HepG2 (cell line): ENCODE measurements at regions of chr21 and their contacts with region 1.

Region 1: GRCh38 chr21:33229784-33230544 is at the start of gene IFNAR2:
- DNase-seq: peak; percentile 40
- ATAC-seq: peak; percentile 80
- H3K4me3 ChIP-seq: peak within 1 kb of the TSS; percentile 87 to 97 (median 89)
- H3K27ac ChIP-seq: peak within 1 kb of the TSS; percentile 91
- H3K4me1 ChIP-seq: peaks cover 71% of the 10 kb centered on the region
- H3K27me3 ChIP-seq: no peaks in the 10 kb centered on the region; a peak in 1 of 5 replicates
- CTCF ChIP-seq: no peak
- EP300 ChIP-seq: no peak
- POLR2A ChIP-seq: peak; percentile 39 to 56; a peak in 2 of 4 replicates
- RAD21 ChIP-seq: 0 out of 2 replicates have a peak, but pooled peaks have one; percentile 7
- total RNA-seq, gene IFNAR2: 5.1 TPM in 2 replicates

Region 2: DNA sequence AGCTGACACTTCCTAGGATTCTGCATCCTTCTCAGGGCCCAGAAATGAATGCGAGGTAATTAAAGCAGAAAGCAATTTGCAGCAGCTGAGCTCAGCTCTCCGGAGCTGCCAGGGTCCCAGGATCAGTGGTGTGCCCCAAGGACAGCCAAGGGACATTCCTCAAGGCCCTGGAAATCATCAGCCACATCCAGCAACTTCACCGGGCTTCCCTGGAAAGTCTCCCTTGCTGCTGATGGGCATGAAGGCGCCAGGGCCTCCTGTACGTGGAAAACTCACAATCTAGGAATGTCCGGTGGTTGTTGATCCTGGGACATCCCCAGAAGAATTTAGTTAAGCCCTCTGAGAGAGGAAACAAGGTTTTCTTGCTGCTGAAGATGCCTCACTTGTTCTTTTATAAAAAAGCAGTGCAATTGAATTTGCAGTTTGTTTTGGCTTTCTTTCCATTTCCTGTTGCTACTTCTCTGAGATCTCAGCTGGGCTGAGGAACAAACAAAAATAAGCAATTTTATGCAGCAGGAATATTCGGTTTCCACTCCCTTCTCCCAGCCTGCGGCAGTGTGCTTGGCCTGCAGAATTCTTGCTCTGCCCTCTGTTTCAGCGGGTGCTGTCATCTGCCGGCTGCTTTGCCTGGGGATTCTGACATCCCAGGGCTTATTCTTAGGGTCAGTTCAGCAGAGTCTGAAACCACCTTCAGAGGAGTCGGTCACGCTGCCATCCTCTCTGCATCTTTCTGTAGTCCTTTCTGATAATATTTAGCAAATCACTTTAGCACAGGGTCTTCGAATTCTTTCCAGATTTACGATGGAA is 730.5 kb before region 1 on chr21:
- CTCF ChIA-PET with region 1: no interaction called
- POLR2A ChIA-PET with region 1: no interaction called
- in situ Hi-C with region 1: no loop called
- intact Hi-C with region 1: no loop called
- DNase-seq: no peak
- ATAC-seq: no peak
- H3K4me3 ChIP-seq: no peak overlapping the region
- H3K27ac ChIP-seq: no peak overlapping the region
- H3K4me1 ChIP-seq: no peaks in the 10 kb centered on the region
- H3K27me3 ChIP-seq: no peaks in the 10 kb centered on the region
- CTCF ChIP-seq: no peak
- EP300 ChIP-seq: no peak
- POLR2A ChIP-seq: no peak
- RAD21 ChIP-seq: no peak

Region 3: GRCh38 chr21:33205476-33205875 is 24.5 kb before region 1 on chr21:
- CTCF ChIA-PET with region 1: no interaction called
- POLR2A ChIA-PET with region 1: interaction called, 7 read pairs
- in situ Hi-C with region 1: no loop called
- intact Hi-C with region 1: loop called (anchors 2 kb)
- DNase-seq: no peak
- ATAC-seq: no peak
- H3K4me3 ChIP-seq: no peak overlapping the region
- H3K27ac ChIP-seq: no peak overlapping the region
- H3K4me1 ChIP-seq: peaks cover 47% of the 10 kb centered on the region
- H3K27me3 ChIP-seq: no peaks in the 10 kb centered on the region
- CTCF ChIP-seq: no peak
- EP300 ChIP-seq: no peak
- POLR2A ChIP-seq: no peak
- RAD21 ChIP-seq: no peak

Region 4: GRCh38 chr21:33266050-33266788 is 36.3 kb after region 1 on chr21 and contains the start of gene IL10RB:
- CTCF ChIA-PET with region 1: no interaction called
- POLR2A ChIA-PET with region 1: interaction called, 4 read pairs
- in situ Hi-C with region 1: no loop called
- intact Hi-C with region 1: loop called (anchors 5 kb)
- DNase-seq: peak; percentile 29
- ATAC-seq: peak; percentile 85
- H3K4me3 ChIP-seq: peak within 1 kb of the TSS; percentile 85 to 89 (median 85)
- H3K27ac ChIP-seq: peak within 1 kb of the TSS; percentile 62
- H3K4me1 ChIP-seq: peaks cover 50% of the 10 kb centered on the region
- H3K27me3 ChIP-seq: no peaks in the 10 kb centered on the region; a peak in 1 of 5 replicates
- CTCF ChIP-seq: peak; percentile 22; the same call in 1 of the 2 replicates
- EP300 ChIP-seq: no peak
- POLR2A ChIP-seq: peak in 1 of 2 experiments; percentile 68; a peak in 2 of 4 replicates
- RAD21 ChIP-seq: no peak
- total RNA-seq, gene IL10RB: 10.7 and 17.4 TPM in 2 replicates